Activated naive CD4-positive, alpha-beta T cell treated with anti-CD3 and anti-CD28 coated beads for 36 hours (primary cell): ENCODE measurements at regions of chr10 and their contacts with region 1.

Region 1: GRCh38 chr10:30687698-30688219 is 58.2 kb upstream of the LYZL2 start:
- DNase-seq: peak; percentile 91
- H3K4me3 Mint-ChIP-seq: no peak overlapping the region
- H3K27ac Mint-ChIP-seq: no peak overlapping the region
- H3K4me1 Mint-ChIP-seq: peaks cover 7% of the 10 kb centered on the region
- H3K27me3 Mint-ChIP-seq: peaks cover 17% of the 10 kb centered on the region

Region 2: DNA sequence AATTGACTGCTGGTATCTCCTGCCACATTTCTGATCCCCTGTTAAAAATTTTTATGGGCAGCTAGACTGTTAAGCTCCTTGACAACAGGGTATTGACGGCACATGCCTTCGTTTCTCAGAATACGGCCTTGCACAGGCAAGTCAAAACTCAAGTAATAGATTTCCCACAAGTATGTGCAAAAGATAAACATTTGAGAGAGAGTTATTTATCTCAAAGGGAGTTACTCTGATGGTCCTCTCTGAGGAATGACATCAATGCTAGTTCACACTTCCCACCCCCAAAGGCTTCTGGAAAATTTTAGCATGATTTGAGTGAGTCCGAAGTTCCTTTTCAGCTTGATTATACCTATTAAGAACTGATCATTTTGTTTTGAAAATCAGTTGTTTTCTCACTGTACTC is 700.3 kb before region 1 on chr10:
- CTCF ChIA-PET with region 1: no interaction called
- intact Hi-C with region 1: no loop called
- DNase-seq: no peak
- H3K4me3 Mint-ChIP-seq: no peak overlapping the region
- H3K27ac Mint-ChIP-seq: no peak overlapping the region
- H3K4me1 Mint-ChIP-seq: no peaks in the 10 kb centered on the region
- H3K27me3 Mint-ChIP-seq: peaks cover 5% of the 10 kb centered on the region

Region 3: DNA sequence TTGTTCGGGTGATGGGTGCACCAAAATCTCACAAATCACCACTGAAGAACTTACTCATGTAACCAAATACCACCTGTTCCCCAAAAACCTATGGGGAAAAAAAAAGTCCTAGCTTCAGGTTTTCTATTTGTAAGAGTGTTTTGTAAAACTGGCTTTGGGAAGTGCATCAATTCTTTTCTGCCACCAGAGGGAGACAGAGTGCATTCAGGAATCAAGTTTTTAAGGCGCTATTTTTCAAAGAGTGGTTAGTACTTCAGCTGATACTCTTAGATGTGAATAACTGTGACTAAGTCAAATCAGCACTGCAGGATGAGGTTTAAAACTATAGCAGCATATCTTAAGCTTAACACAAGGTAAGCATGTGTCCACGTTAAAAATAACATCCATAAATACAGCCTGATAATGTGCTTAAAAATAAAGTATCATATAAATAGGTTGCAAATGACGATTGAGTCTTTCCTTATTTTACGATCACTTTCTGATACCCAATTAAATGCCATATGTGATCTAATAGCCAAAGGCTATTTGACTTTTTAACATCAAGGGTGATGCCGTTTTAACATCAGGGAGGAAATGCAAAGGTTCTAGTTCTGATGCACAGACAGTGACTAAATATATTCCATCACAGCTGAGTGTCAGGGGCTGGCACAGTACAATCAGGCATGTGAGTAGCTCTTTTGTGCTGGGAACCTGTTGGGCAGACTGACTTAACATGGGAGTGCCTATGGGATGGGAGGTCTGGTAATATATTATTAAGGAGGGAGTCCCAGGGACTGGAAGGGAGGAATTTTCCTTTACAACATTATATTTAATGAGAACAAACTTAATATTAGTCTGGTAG is 47.6 kb before region 1 on chr10:
- CTCF ChIA-PET with region 1: interaction called, 13 read pairs
- intact Hi-C with region 1: no loop called
- DNase-seq: peak; percentile 28
- H3K4me3 Mint-ChIP-seq: no peak overlapping the region
- H3K27ac Mint-ChIP-seq: no peak overlapping the region
- H3K4me1 Mint-ChIP-seq: peaks cover 3% of the 10 kb centered on the region
- H3K27me3 Mint-ChIP-seq: peaks cover 26% of the 10 kb centered on the region

Region 4: GRCh38 chr10:30671026-30671616 is 16.6 kb before region 1 on chr10:
- CTCF ChIA-PET with region 1: interaction called, 9 read pairs
- intact Hi-C with region 1: loop called (anchors 1 kb)
- DNase-seq: peak; percentile 49
- H3K4me3 Mint-ChIP-seq: peak overlapping the region; percentile 32
- H3K27ac Mint-ChIP-seq: no peak overlapping the region
- H3K4me1 Mint-ChIP-seq: peaks cover 3% of the 10 kb centered on the region
- H3K27me3 Mint-ChIP-seq: peaks cover 9% of the 10 kb centered on the region

Region 5: GRCh38 chr10:30722956-30723620 is 35.3 kb after region 1 on chr10:
- CTCF ChIA-PET with region 1: interaction called, 103 read pairs
- intact Hi-C with region 1: loop called (anchors 1 kb)
- DNase-seq: no peak
- H3K4me3 Mint-ChIP-seq: no peak overlapping the region
- H3K27ac Mint-ChIP-seq: no peak overlapping the region
- H3K4me1 Mint-ChIP-seq: no peaks in the 10 kb centered on the region
- H3K27me3 Mint-ChIP-seq: no peaks in the 10 kb centered on the region

Region 6: DNA sequence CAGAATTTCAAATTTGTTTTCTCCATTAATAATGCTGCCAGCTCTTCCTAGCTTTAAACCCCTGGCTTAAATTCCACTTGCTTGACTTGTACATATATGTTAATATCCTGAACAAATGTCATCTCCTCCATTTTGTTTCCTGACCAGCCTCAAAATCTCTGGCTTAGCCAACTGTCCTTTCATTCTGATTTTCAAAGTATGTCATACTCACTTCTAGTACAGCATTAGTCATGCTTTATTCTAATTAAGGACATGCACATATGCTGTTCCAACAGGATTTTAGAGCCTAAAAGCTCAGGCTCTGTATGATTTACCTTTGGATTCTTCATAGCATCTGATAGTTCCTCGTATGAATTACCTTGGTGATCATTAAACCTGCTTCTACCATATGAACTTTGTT is 185.7 kb after region 1 on chr10:
- CTCF ChIA-PET with region 1: no interaction called
- intact Hi-C with region 1: no loop called
- DNase-seq: no peak
- H3K4me3 Mint-ChIP-seq: no peak overlapping the region
- H3K27ac Mint-ChIP-seq: no peak overlapping the region
- H3K4me1 Mint-ChIP-seq: no peaks in the 10 kb centered on the region
- H3K27me3 Mint-ChIP-seq: no peaks in the 10 kb centered on the region